GM12878 (cell line): ENCODE measurements at regions of chr3 and their contacts with region 1.

Region 1: GRCh38 chr3:157081681-157082210 is 78.2 kb downstream of the CCNL1 start:
- DNase-seq: no peak
- ATAC-seq: peak; percentile 95
- H3K4me3 ChIP-seq: no peak overlapping the region
- H3K27ac ChIP-seq: no peak overlapping the region
- H3K4me1 ChIP-seq: peaks cover 14% of the 10 kb centered on the region
- H3K27me3 ChIP-seq: no peaks in the 10 kb centered on the region
- CTCF ChIP-seq: peak; percentile 95
- EP300 ChIP-seq: no peak
- POLR2A ChIP-seq: no peak
- RAD21 ChIP-seq: peak; percentile 100

Region 2: GRCh38 chr3:156547637-156548036 is 534.1 kb before region 1 on chr3:
- CTCF ChIA-PET with region 1: interaction called, 8 read pairs
- POLR2A ChIA-PET with region 1: interaction called, 4 read pairs
- RAD21 ChIA-PET with region 1: no interaction called
- SMC1A ChIA-PET with region 1: interaction called, 12 read pairs
- in situ Hi-C with region 1: loop called (anchors 5 kb)
- intact Hi-C with region 1: loop called (anchors 5 kb)
- DNase-seq: no peak
- ATAC-seq: no peak
- H3K4me3 ChIP-seq: no peak overlapping the region
- H3K27ac ChIP-seq: no peak overlapping the region
- H3K4me1 ChIP-seq: no peaks in the 10 kb centered on the region; the same call in 1 of the 2 replicates
- H3K27me3 ChIP-seq: no peaks in the 10 kb centered on the region
- CTCF ChIP-seq: no peak
- EP300 ChIP-seq: no peak
- POLR2A ChIP-seq: no peak
- RAD21 ChIP-seq: no peak

Region 3: DNA sequence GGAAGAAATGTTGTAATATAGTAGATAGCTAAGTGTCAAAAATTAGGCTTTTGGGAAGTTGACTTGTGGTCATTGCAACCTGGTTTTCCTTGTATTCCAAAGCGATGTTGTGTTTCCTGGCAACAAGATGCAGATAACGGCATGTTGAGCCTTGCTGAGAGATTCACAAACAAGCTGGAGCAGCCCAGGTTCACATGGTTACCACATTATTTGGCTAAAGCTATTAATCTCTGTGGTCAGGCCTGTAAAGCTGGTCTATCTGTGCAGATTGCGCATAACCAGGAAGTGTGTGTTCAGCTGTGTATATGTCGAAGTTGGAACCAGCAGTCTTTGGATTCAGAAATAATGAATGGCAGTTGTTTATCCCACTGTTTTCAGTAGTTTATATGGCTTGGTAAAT is 400.7 kb before region 1 on chr3:
- CTCF ChIA-PET with region 1: interaction called, 199 read pairs
- POLR2A ChIA-PET with region 1: interaction called, 6 read pairs
- RAD21 ChIA-PET with region 1: interaction called, 40 read pairs
- SMC1A ChIA-PET with region 1: interaction called, 142 read pairs
- in situ Hi-C with region 1: loop called (anchors 5 kb)
- intact Hi-C with region 1: no loop called
- DNase-seq: no peak
- ATAC-seq: peak; percentile 76
- H3K4me3 ChIP-seq: peak overlapping the region; percentile 44
- H3K27ac ChIP-seq: peak overlapping the region; percentile 40
- H3K4me1 ChIP-seq: peaks cover 36% of the 10 kb centered on the region
- H3K27me3 ChIP-seq: no peaks in the 10 kb centered on the region
- CTCF ChIP-seq: no peak
- EP300 ChIP-seq: peak; percentile 33 to 90; a peak in 1 of 4 replicates
- POLR2A ChIP-seq: no peak
- RAD21 ChIP-seq: no peak

Region 4: GRCh38 chr3:156826144-156826895 is 255.4 kb before region 1 on chr3 and contains the start of gene LEKR1:
- CTCF ChIA-PET with region 1: no interaction called
- POLR2A ChIA-PET with region 1: no interaction called
- RAD21 ChIA-PET with region 1: interaction called, 3 read pairs
- SMC1A ChIA-PET with region 1: interaction called, 5 read pairs
- in situ Hi-C with region 1: loop called (anchors 5 kb)
- intact Hi-C with region 1: no loop called
- DNase-seq: peak; percentile 44
- ATAC-seq: peak; percentile 89
- H3K4me3 ChIP-seq: peak within 1 kb of the TSS; percentile 73
- H3K27ac ChIP-seq: peak within 1 kb of the TSS; percentile 93
- H3K4me1 ChIP-seq: peaks cover 7% of the 10 kb centered on the region; the same call in 1 of the 2 replicates
- H3K27me3 ChIP-seq: no peaks in the 10 kb centered on the region
- CTCF ChIP-seq: no peak
- EP300 ChIP-seq: peak; percentile 20 to 27; a peak in 1 of 4 replicates
- POLR2A ChIP-seq: peak; percentile 74
- RAD21 ChIP-seq: no peak
- polyA plus RNA-seq, gene LEKR1: 1.3 to 1.6 TPM

Region 5: DNA sequence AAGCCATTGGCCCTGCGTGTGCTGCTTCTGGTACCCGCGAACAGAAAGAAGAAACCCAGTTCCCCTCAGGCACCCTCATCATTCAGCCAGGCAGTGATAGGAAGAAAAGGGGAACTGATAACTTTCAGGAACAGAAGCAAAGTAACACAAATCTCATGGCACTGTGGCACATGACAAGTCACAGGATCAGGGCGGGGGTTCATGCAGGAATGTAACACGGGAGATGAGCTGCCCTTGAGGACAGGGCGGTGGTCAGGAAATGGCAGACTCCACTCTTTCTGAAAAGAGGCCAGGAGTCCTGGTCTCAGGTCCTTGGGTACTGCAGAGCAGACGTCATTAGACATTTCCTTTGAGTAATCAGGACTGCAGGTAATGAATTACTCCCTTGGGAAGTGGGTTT is 17.3 kb before region 1 on chr3:
- CTCF ChIA-PET with region 1: interaction called, 14 read pairs
- POLR2A ChIA-PET with region 1: no interaction called
- RAD21 ChIA-PET with region 1: interaction called, 9 read pairs
- SMC1A ChIA-PET with region 1: interaction called, 8 read pairs
- in situ Hi-C with region 1: no loop called
- intact Hi-C with region 1: no loop called
- DNase-seq: peak; percentile 48
- ATAC-seq: peak; percentile 81
- H3K4me3 ChIP-seq: no peak overlapping the region
- H3K27ac ChIP-seq: peak overlapping the region; percentile 48; the same call in 1 of the 2 replicates
- H3K4me1 ChIP-seq: peaks cover 38% of the 10 kb centered on the region
- H3K27me3 ChIP-seq: no peaks in the 10 kb centered on the region
- CTCF ChIP-seq: no peak
- EP300 ChIP-seq: peak; percentile 46 to 59; a peak in 2 of 4 replicates
- POLR2A ChIP-seq: no peak
- RAD21 ChIP-seq: 0 out of 2 replicates have a peak, but pooled peaks have one; percentile 14

Region 6: DNA sequence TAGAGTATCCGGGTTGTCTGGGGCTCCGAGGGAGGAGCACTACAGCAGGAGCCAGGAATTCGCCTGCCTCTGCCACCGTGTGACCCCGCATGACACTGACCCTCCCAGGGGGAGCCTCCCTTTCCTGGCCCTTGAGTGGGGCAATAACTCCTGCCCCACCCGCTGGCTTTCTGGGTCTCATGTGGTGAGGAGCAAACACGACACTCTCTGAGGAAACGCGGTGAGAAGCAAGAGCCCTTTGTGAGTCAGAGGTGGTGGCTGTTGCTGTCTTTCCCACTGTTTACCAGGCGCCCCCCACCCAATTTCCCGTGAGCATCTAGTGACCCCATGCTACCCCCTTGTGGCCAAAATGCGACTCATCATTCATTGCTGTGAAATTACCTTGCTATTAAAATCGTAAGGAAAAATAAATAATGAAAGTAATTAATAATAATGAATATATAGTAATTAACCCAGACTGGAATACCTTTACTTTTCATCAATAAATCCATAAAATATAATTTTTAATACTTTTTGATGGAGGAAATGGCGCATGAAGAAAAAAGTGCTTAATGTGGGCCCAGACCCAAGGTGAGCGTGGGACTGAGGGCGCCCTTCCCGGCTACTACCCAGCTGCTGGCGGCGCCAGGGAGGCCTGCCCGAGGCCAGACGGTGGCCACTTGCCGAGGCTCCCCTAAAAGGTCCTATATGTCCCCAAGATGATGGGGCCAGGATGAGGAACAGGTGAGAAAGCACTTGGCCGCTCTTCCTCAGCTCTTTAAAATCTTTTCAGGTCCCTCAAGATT is 48.9 kb after region 1 on chr3:
- CTCF ChIA-PET with region 1: interaction called, 939 read pairs
- POLR2A ChIA-PET with region 1: interaction called, 3 read pairs
- RAD21 ChIA-PET with region 1: interaction called, 153 read pairs
- SMC1A ChIA-PET with region 1: interaction called, 98 read pairs
- in situ Hi-C with region 1: no loop called
- intact Hi-C with region 1: no loop called
- DNase-seq: no peak
- ATAC-seq: no peak; the same call in 2 of the 3 replicates
- H3K4me3 ChIP-seq: no peak overlapping the region
- H3K27ac ChIP-seq: peak overlapping the region; percentile 44
- H3K4me1 ChIP-seq: peaks cover 34% of the 10 kb centered on the region
- H3K27me3 ChIP-seq: no peaks in the 10 kb centered on the region
- CTCF ChIP-seq: peak; percentile 59 to 69 (median 65)
- EP300 ChIP-seq: no peak
- POLR2A ChIP-seq: no peak
- RAD21 ChIP-seq: peak; percentile 80